ENCODE measurements at regions of chr1 and their contacts with region 1.

Region 1: GRCh38 chr1:98794196-98794886 is 132.8 kb downstream of the SNX7 start:
- DNase-seq: peak; percentile 86
- H3K4me3 Mint-ChIP-seq: no peak overlapping the region
- H3K27ac Mint-ChIP-seq: no peak overlapping the region
- H3K4me1 Mint-ChIP-seq: peaks cover 21% of the 10 kb centered on the region
- H3K27me3 Mint-ChIP-seq: peaks cover 8% of the 10 kb centered on the region

Region 2: GRCh38 chr1:98732985-98733781 is 61.2 kb before region 1 on chr1:
- intact Hi-C with region 1: no loop called
- DNase-seq: no peak
- H3K4me3 Mint-ChIP-seq: no peak overlapping the region
- H3K27ac Mint-ChIP-seq: no peak overlapping the region
- H3K4me1 Mint-ChIP-seq: no peaks in the 10 kb centered on the region
- H3K27me3 Mint-ChIP-seq: peaks cover 6% of the 10 kb centered on the region

Region 3: GRCh38 chr1:98870959-98871903 is 76.9 kb after region 1 on chr1:
- intact Hi-C with region 1: loop called (anchors 2 kb)
- DNase-seq: peak; percentile 88
- H3K4me3 Mint-ChIP-seq: peak overlapping the region; percentile 72
- H3K27ac Mint-ChIP-seq: peak overlapping the region; percentile 92
- H3K4me1 Mint-ChIP-seq: peaks cover 23% of the 10 kb centered on the region
- H3K27me3 Mint-ChIP-seq: no peaks in the 10 kb centered on the region

Region 4: GRCh38 chr1:98949621-98950020 is 155.3 kb after region 1 on chr1:
- intact Hi-C with region 1: no loop called
- DNase-seq: no peak
- H3K4me3 Mint-ChIP-seq: no peak overlapping the region
- H3K27ac Mint-ChIP-seq: no peak overlapping the region
- H3K4me1 Mint-ChIP-seq: no peaks in the 10 kb centered on the region
- H3K27me3 Mint-ChIP-seq: no peaks in the 10 kb centered on the region

Region 5: GRCh38 chr1:98991127-98992012 is 197.0 kb after region 1 on chr1:
- intact Hi-C with region 1: loop called (anchors 10 kb)
- DNase-seq: peak; percentile 56
- H3K4me3 Mint-ChIP-seq: no peak overlapping the region
- H3K27ac Mint-ChIP-seq: peak overlapping the region; percentile 70
- H3K4me1 Mint-ChIP-seq: peaks cover 7% of the 10 kb centered on the region
- H3K27me3 Mint-ChIP-seq: peaks cover 2% of the 10 kb centered on the region

Region 6: DNA sequence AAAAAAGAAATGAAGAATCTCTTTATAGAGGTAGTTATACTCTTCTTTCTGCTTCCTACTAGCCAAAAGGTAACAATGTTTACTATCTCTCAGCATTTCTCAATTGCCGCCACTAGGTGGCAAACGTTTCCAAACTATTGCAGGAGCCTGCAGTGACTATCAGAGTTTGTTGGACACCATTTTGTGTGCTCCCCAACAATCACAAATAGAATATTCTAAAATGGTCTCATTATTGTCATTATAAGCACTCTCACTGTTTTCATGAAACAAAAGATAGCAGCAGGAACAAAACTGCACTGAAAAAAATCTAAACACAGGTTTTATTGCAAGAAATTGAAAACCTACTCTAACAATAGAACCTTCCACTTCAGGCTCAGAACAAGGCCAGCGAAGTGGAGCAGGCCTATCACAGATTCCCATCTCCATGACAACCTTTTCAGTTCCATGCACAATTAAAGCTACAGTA is 386.0 kb after region 1 on chr1:
- intact Hi-C with region 1: loop called (anchors 5 kb)
- DNase-seq: peak; percentile 88
- H3K4me3 Mint-ChIP-seq: no peak overlapping the region
- H3K27ac Mint-ChIP-seq: no peak overlapping the region
- H3K4me1 Mint-ChIP-seq: no peaks in the 10 kb centered on the region
- H3K27me3 Mint-ChIP-seq: peaks cover 4% of the 10 kb centered on the region

Region 7: DNA sequence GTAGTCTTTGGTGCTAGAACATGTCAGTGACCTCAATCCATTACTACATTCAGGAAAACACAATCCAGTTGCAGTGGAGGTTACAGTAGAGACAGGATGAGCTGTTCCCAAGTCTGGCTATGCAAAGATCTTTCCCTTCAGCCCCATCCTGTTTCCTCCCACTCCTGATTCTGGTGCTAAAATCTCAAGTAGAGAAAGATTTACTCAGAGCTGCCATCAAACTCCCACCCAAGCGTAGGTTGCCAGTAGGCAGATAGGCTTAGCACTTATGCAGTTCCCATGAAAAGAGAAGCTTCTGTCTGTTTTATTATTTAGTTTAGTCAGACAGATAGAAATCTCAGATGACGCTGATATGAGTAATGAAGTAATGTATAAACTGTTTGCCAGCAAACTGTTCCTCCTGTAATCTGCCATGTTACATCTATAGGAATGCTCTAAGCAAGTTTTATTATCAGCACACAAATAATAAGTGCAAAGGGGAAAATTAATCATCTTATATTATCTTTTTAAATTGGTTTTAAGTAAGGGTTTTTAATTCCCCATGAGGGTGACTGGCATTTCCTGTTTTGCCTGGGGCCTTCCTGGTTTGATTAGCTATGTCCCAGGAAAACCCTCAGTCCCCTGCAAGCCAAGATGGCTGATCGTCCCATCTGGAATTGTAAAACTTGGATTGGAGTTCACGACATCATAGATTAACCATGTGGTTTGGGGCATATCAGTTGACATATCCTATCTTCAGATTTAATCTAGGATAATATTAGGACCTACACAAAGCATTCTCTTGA is 663.2 kb after region 1 on chr1:
- intact Hi-C with region 1: no loop called
- DNase-seq: no peak
- H3K4me3 Mint-ChIP-seq: no peak overlapping the region
- H3K27ac Mint-ChIP-seq: no peak overlapping the region
- H3K4me1 Mint-ChIP-seq: no peaks in the 10 kb centered on the region
- H3K27me3 Mint-ChIP-seq: peaks cover 3% of the 10 kb centered on the region

Region 8: GRCh38 chr1:99481391-99481996 is 687.2 kb after region 1 on chr1:
- intact Hi-C with region 1: loop called (anchors 1 kb)
- DNase-seq: peak; percentile 78
- H3K4me3 Mint-ChIP-seq: no peak overlapping the region
- H3K27ac Mint-ChIP-seq: no peak overlapping the region
- H3K4me1 Mint-ChIP-seq: no peaks in the 10 kb centered on the region
- H3K27me3 Mint-ChIP-seq: peaks cover 5% of the 10 kb centered on the region

Region 9: GRCh38 chr1:99707535-99708142 is 913.3 kb after region 1 on chr1:
- intact Hi-C with region 1: loop called (anchors 2 kb)
- DNase-seq: peak; percentile 87
- H3K4me3 Mint-ChIP-seq: no peak overlapping the region
- H3K27ac Mint-ChIP-seq: no peak overlapping the region
- H3K4me1 Mint-ChIP-seq: peaks cover 7% of the 10 kb centered on the region
- H3K27me3 Mint-ChIP-seq: peaks cover 4% of the 10 kb centered on the region